ENCODE measurements at regions of chr17 and their contacts with region 1.

Region 1: GRCh38 chr17:18038861-18039534 is at the starts of genes ATPAF2 and GID4:
- DNase-seq: peak; percentile 100
- ATAC-seq: peak; percentile 86
- H3K4me3 ChIP-seq: peak within 1 kb of the TSS; percentile 85 to 100 (median 96)
- H3K4me3 Mint-ChIP-seq: peak within 1 kb of the TSS; percentile 93
- H3K27ac ChIP-seq: peak within 1 kb of the TSS; percentile 43 to 90
- H3K27ac Mint-ChIP-seq: peak within 1 kb of the TSS; percentile 92
- H3K4me1 ChIP-seq: peaks cover 24 to 33% of the 10 kb centered on the region in 2 donors
- H3K4me1 Mint-ChIP-seq: peaks cover 61% of the 10 kb centered on the region
- H3K27me3 ChIP-seq: no peaks in the 10 kb centered on the region
- H3K27me3 Mint-ChIP-seq: no peaks in the 10 kb centered on the region
- CTCF ChIP-seq: no peak
- total RNA-seq, gene ATPAF2: 73.5 and 79.5 TPM in 2 replicates
- total RNA-seq, gene GID4: 11.6 and 11.8 TPM in 2 replicates

Region 2: DNA sequence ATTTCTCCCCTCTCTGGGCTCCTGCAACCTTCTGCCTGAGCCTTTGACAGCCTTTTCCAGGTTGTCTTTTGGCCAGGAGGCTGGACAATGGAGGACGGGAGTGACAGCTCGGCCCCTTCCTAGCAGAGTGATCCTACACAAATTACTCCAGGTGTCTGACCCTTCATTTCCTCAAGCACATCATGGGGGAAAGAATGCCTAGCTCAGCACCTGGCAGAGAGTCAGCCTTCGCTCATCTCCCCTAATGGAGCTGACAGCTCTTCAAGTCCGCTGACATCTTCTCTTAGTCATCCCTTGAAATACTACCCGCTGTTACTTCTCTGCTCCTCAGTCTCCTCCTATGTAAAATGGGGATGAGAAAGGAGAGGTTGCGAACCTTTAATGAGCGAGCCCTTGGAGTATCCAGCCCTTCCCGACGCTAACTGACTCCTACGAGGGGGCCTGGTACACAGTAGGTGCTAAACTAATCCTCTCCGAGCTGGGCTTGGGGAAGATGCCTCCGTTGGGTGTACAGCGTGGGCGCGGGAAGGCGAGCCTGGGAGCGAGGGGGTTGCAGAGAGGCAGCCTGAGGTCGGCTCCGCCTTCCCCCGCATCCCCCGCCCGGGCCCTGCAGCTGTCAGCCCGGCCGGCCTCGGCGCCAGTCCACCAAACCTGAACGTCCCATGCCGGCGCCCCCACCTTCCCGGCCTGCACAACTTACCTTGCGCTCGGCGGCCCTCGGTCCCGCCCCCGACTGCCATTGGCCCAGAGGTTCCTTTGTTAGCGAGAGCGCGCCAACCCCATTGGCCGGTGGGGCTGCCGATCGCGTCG is 997.2 kb before region 1 on chr17:
- CTCF ChIA-PET with region 1: no interaction called
- POLR2A ChIA-PET with region 1: no interaction called
- intact Hi-C with region 1: loop called (anchors 10 kb)
- DNase-seq: peak; percentile 97
- ATAC-seq: peak; percentile 92
- H3K4me3 ChIP-seq: peak overlapping the region in 4 of 5 experiments; percentile 43 to 55 (median 50)
- H3K4me3 Mint-ChIP-seq: peak overlapping the region; percentile 71
- H3K27ac ChIP-seq: no peak overlapping the region
- H3K27ac Mint-ChIP-seq: peak overlapping the region; percentile 26
- H3K4me1 ChIP-seq: peaks cover 40 to 48% of the 10 kb centered on the region in 2 donors
- H3K4me1 Mint-ChIP-seq: peaks cover 47% of the 10 kb centered on the region
- H3K27me3 ChIP-seq: no peaks in the 10 kb centered on the region
- H3K27me3 Mint-ChIP-seq: no peaks in the 10 kb centered on the region
- CTCF ChIP-seq: no peak

Region 3: GRCh38 chr17:17496189-17497064 is 542.6 kb before region 1 on chr17 and contains the start of gene RASD1:
- CTCF ChIA-PET with region 1: no interaction called
- POLR2A ChIA-PET with region 1: no interaction called
- intact Hi-C with region 1: loop called (anchors 5 kb)
- DNase-seq: peak; percentile 86
- ATAC-seq: peak; percentile 88
- H3K4me3 ChIP-seq: peak within 1 kb of the TSS; percentile 42 to 67 (median 58)
- H3K4me3 Mint-ChIP-seq: peak within 1 kb of the TSS; percentile 92
- H3K27ac ChIP-seq: no peak within 1 kb of the TSS
- H3K27ac Mint-ChIP-seq: no peak within 1 kb of the TSS
- H3K4me1 ChIP-seq: peaks cover 24% of the 10 kb centered on the region in 2 donors
- H3K4me1 Mint-ChIP-seq: peaks cover 22% of the 10 kb centered on the region
- H3K27me3 ChIP-seq: peaks cover 0 to 29% (median 6%) of the 10 kb centered on the region in 4 experiments
- H3K27me3 Mint-ChIP-seq: peaks cover 8% of the 10 kb centered on the region
- CTCF ChIP-seq: peak; percentile 94
- total RNA-seq, gene RASD1: 3.2 and 4.4 TPM in 2 replicates

Region 4: DNA sequence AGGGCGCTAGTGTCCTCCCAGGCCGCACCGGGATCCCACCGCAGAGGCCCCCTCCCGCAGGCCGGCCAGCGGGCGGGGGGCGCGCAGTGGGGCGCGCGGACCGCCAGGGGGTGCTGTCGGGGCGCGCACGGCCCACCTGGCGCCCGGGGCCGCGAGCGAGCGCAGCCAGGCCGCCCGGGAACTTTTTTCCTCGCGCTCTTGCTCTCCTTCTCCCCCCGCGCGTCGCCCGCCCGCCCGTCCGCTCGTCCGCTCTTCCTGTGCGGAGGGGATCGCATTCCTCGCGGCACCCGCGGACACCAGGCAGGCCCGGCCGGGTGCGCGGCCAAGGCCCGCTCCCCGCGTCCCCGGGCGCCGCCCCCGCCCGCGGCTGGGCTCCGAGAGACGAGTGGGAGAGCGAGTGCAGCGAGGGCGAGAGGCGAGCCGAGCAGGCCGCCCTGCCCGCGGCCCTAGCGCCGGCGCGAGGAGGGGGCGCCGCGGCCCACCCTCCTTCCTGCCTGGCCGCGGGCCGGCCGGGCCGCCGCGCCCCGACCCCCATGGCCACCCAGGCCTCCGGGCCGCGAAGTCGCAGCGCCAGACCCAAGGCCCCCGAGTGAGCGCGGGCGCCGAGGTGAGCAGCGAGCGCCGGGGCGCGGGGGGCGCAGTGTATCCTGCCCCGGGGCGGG is 357.7 kb before region 1 on chr17 and contains the start of gene RAI1:
- CTCF ChIA-PET with region 1: interaction called, 15 read pairs
- POLR2A ChIA-PET with region 1: no interaction called
- intact Hi-C with region 1: loop called (anchors 1 kb)
- DNase-seq: peak; percentile 90
- ATAC-seq: peak; percentile 64
- H3K4me3 ChIP-seq: peak within 1 kb of the TSS in 4 of 5 experiments; percentile 66 to 86 (median 72)
- H3K4me3 Mint-ChIP-seq: peak within 1 kb of the TSS; percentile 91
- H3K27ac ChIP-seq: peak within 1 kb of the TSS; percentile 86 to 97
- H3K27ac Mint-ChIP-seq: peak within 1 kb of the TSS; percentile 88
- H3K4me1 ChIP-seq: peaks cover 7 to 19% of the 10 kb centered on the region in 2 donors
- H3K4me1 Mint-ChIP-seq: peaks cover 30% of the 10 kb centered on the region
- H3K27me3 ChIP-seq: peaks cover 0 to 3% (median 0%) of the 10 kb centered on the region in 4 experiments
- H3K27me3 Mint-ChIP-seq: peaks cover 5% of the 10 kb centered on the region
- CTCF ChIP-seq: peak; percentile 74
- total RNA-seq, gene RAI1: 33.6 and 34.0 TPM in 2 replicates

Region 5: DNA sequence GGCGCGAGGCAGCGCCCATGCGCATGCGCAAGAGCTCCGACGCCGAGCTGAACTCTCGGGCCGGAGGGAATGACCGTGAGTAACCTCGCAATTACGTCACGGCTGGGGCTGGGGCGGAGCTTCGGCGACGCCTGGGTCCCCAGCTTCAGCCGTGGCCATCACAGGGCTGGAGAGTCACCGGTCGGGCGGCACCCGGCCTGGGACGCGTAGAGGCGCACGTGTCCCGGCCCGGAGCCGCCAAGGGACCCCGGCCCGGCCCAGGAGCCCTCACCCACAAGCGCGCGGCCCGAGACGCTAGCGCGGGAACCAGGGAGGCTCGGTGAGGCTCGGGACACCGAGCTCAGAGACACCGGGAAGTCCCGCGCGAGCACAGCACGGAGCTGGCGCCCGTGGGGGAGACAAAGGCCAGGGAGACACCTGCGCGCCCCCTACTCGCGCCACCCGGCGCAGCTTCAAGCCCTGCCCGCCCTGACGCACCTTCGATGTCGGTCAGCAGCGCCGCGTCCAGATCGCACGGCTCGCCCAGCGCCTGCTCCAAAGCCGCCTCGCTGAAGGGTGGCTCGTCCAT is 202.7 kb before region 1 on chr17:
- CTCF ChIA-PET with region 1: no interaction called
- POLR2A ChIA-PET with region 1: no interaction called
- intact Hi-C with region 1: loop called (anchors 10 kb)
- DNase-seq: peak; percentile 98
- ATAC-seq: peak; percentile 69
- H3K4me3 ChIP-seq: peak overlapping the region; percentile 23 to 91 (median 89)
- H3K4me3 Mint-ChIP-seq: peak overlapping the region; percentile 88
- H3K27ac ChIP-seq: peak overlapping the region; percentile 93 to 97
- H3K27ac Mint-ChIP-seq: peak overlapping the region; percentile 91
- H3K4me1 ChIP-seq: peaks cover 45 to 64% of the 10 kb centered on the region in 2 donors
- H3K4me1 Mint-ChIP-seq: peaks cover 61% of the 10 kb centered on the region
- H3K27me3 ChIP-seq: no peaks in the 10 kb centered on the region
- H3K27me3 Mint-ChIP-seq: no peaks in the 10 kb centered on the region
- CTCF ChIP-seq: no peak

Region 6: DNA sequence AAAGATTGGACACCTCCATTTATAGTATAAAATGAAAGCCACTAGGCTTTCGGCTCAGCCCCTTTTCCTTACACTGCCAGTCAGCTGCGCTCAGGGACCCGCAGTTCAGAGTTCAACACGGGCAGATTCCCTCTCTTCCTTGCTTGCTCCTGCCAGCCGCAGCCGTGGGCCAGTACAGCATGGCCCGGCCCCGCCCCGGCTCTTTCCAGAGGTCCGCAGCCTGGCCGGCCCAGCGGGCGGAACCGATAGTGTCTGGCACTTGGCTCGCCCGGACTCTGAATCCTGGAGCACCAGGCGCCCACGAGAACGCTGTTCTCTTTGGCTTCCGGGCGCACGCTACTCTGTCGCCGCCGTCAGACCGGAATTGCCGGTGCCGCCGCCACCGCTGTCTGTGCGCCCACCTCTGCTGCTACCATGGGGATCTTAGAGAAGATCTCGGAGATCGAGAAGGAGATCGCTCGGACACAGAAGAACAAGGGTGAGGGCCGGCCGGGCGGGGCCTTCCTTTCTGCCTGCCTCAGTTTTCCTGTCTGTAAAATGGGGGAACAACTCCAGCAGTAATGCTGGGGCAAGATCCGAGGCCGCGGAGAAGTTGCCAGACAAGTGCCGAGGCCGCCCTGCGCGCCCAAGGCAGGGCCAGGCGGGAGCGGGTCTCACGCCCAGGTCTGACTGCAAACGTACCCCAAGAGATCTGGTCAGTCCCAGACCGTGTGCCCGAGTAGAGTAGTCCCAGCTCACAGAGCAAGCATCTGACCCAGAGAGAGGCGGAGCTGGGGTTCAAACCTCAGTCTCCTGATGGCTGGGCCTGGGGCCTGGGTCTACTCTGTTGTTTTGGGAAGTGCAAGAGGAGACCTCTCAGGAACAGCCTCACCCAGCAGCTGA is 48.9 kb after region 1 on chr17 and contains the start of gene DRG2:
- CTCF ChIA-PET with region 1: no interaction called
- POLR2A ChIA-PET with region 1: no interaction called
- intact Hi-C with region 1: loop called (anchors 1 kb)
- DNase-seq: peak; percentile 94
- ATAC-seq: peak; percentile 92
- H3K4me3 ChIP-seq: peak within 1 kb of the TSS; percentile 71 to 99 (median 91)
- H3K4me3 Mint-ChIP-seq: peak within 1 kb of the TSS; percentile 99
- H3K27ac ChIP-seq: peak within 1 kb of the TSS; percentile 67 to 90
- H3K27ac Mint-ChIP-seq: peak within 1 kb of the TSS; percentile 98
- H3K4me1 ChIP-seq: peaks cover 8 to 22% of the 10 kb centered on the region in 2 donors
- H3K4me1 Mint-ChIP-seq: peaks cover 25% of the 10 kb centered on the region
- H3K27me3 ChIP-seq: no peaks in the 10 kb centered on the region
- H3K27me3 Mint-ChIP-seq: no peaks in the 10 kb centered on the region
- CTCF ChIP-seq: no peak
- total RNA-seq, gene DRG2: 67.8 and 73.1 TPM in 2 replicates

Region 7: GRCh38 chr17:18129041-18129502 is 90.1 kb after region 1 on chr17:
- CTCF ChIA-PET with region 1: no interaction called
- POLR2A ChIA-PET with region 1: no interaction called
- intact Hi-C with region 1: no loop called
- DNase-seq: no peak
- ATAC-seq: no peak
- H3K4me3 ChIP-seq: no peak overlapping the region
- H3K4me3 Mint-ChIP-seq: no peak overlapping the region
- H3K27ac ChIP-seq: no peak overlapping the region
- H3K27ac Mint-ChIP-seq: no peak overlapping the region
- H3K4me1 ChIP-seq: no peaks in the 10 kb centered on the region
- H3K4me1 Mint-ChIP-seq: no peaks in the 10 kb centered on the region
- H3K27me3 ChIP-seq: no peaks in the 10 kb centered on the region
- H3K27me3 Mint-ChIP-seq: no peaks in the 10 kb centered on the region
- CTCF ChIP-seq: no peak